ENCODE measurements at regions of chr17 and their contacts with region 1.

Region 1: DNA sequence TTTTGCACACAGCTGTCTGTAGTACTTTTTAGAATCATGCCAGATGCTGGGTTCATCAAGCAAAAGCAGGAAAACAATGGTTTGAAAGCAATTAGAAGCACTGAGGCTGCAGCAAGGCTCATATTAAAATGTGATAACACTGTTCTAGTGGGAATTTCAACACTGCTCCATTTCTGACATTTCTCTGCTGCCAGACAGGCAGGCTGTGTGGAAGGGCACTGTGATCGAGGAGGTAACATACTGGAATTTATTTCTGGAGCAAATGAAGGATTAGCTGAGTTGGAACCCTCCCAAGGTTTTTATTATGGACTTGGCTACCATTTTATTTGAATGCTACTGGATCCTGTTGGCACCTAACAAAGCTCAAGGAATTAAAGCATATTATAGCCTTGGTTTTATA is 66.9 kb downstream of the SKAP1 start:
- DNase-seq: no peak
- H3K4me3 ChIP-seq: no peak overlapping the region
- H3K27ac ChIP-seq: no peak overlapping the region
- H3K4me1 ChIP-seq: no peaks in the 10 kb centered on the region
- H3K27me3 ChIP-seq: peaks cover 0 to 74% (median 5%) of the 10 kb centered on the region in 4 donors
- CTCF ChIP-seq: no peak
- EP300 ChIP-seq: no peak
- POLR2A ChIP-seq: no peak

Region 2: DNA sequence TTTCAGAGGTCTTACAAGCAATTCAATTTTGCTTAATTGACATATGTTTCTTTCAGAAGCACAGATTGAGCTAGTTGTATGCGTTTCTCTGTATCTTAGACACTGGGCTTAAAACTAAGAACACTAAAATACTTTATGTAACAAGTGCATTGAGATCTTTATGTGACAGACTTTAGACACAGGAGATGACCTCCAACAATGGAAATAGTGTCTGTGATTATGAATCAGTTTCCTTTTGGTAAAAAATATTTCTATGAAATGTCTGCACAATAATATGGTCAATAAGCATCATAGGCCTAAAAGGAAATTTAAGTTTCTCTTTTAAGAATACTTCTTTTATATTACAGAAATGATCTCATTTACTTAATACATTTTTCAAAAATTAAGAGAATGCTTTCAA is 86.4 kb before region 1 on chr17:
- intact Hi-C with region 1: no loop called
- DNase-seq: no peak
- H3K4me3 ChIP-seq: no peak overlapping the region
- H3K27ac ChIP-seq: no peak overlapping the region
- H3K4me1 ChIP-seq: no peaks in the 10 kb centered on the region
- H3K27me3 ChIP-seq: peaks cover 0 to 40% (median 0%) of the 10 kb centered on the region in 4 donors
- CTCF ChIP-seq: no peak
- EP300 ChIP-seq: no peak
- POLR2A ChIP-seq: no peak

Region 3: DNA sequence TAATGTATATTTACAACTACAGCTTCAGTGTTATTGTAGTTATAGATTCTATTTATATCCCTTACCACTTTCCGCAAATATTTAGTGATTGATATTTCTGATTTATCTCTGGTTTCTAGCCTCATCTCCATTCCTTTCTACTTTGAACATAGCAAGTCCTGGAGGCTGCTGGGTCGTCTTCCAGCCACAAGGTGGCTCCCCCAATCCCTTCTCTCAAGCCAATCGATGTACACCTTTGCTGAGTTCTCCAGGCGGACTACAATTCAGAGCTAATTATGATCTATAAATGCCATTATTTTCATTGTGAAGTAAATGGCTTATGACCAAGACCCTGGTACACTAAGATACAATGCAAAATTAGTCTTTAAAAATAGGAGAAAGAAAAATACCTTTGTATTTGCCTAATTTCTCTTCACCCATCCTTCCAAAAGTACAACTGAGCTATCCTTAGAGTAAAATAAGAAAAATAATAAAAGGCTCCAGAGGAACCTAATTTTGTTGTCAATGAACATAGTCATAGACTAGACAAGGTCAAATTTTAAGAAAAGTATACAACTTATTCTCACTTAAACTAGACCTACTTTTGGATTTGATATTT is 55.2 kb before region 1 on chr17:
- intact Hi-C with region 1: no loop called
- DNase-seq: no peak
- H3K4me3 ChIP-seq: no peak overlapping the region
- H3K27ac ChIP-seq: no peak overlapping the region
- H3K4me1 ChIP-seq: no peaks in the 10 kb centered on the region
- H3K27me3 ChIP-seq: peaks cover 0 to 84% (median 36%) of the 10 kb centered on the region in 4 donors
- CTCF ChIP-seq: peak; percentile 60 to 78 (median 65)
- EP300 ChIP-seq: no peak
- POLR2A ChIP-seq: no peak

Region 4: GRCh38 chr17:48457080-48457836 is 94.1 kb after region 1 on chr17:
- intact Hi-C with region 1: loop called (anchors 10 kb)
- DNase-seq: no peak
- H3K4me3 ChIP-seq: no peak overlapping the region
- H3K27ac ChIP-seq: no peak overlapping the region
- H3K4me1 ChIP-seq: peaks cover 8 to 11% (median 10%) of the 10 kb centered on the region in 4 donors
- H3K27me3 ChIP-seq: peaks cover 0 to 42% (median 2%) of the 10 kb centered on the region in 4 donors
- CTCF ChIP-seq: peak; percentile 77 to 99 (median 85)
- EP300 ChIP-seq: no peak
- POLR2A ChIP-seq: no peak